ENCODE measurements at regions of chr19 and their contacts with region 1.

Region 1: DNA sequence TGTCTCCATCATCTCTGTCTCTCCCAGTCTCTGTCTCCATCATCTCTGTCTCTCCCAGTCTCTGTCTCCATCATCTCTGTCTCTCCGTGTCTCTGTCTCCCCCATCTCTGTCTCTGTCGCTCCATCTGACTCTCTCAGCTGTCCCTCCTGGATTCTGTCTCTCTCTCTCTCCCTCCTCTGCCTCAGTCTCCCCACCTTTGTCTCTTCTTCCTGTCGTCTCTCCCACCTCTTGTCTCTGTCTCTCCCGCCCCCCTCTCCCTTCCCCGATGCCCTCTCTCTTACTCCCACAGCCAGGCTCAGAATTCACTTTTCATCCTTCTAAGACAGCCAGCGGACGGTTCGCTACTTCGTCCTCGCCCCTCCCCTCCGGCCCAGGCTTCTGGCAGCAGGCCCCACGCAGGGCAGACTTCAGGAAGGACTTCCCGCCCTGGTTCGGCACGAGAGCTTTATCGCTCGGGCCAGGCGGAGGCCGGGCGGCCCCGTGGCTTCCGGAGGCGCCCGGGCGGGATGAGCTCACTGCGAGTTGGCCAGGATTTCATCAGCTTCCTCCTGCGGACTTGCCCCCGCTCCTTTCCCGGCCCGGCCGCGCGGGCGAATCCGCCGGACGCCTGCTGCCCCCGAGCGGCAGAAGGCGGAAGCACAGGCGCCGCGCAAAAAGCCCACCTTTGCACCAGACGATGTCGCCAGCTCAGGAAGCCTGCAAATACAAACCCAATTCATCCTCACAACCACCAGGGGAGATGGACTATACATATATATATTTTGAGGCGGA is 12.4 kb upstream of the CCDC9 start:
- DNase-seq: peak; percentile 90
- H3K4me3 Mint-ChIP-seq: peak overlapping the region; percentile 80
- H3K27ac Mint-ChIP-seq: peak overlapping the region; percentile 93
- H3K4me1 Mint-ChIP-seq: peaks cover 14% of the 10 kb centered on the region
- H3K27me3 Mint-ChIP-seq: peaks cover 7% of the 10 kb centered on the region

Region 2: GRCh38 chr19:47013041-47013517 is 230.9 kb before region 1 on chr19:
- intact Hi-C with region 1: loop called (anchors 1 kb)
- DNase-seq: peak; percentile 54
- H3K4me3 Mint-ChIP-seq: no peak overlapping the region
- H3K27ac Mint-ChIP-seq: no peak overlapping the region
- H3K4me1 Mint-ChIP-seq: peaks cover 11% of the 10 kb centered on the region
- H3K27me3 Mint-ChIP-seq: peaks cover 23% of the 10 kb centered on the region

Region 3: DNA sequence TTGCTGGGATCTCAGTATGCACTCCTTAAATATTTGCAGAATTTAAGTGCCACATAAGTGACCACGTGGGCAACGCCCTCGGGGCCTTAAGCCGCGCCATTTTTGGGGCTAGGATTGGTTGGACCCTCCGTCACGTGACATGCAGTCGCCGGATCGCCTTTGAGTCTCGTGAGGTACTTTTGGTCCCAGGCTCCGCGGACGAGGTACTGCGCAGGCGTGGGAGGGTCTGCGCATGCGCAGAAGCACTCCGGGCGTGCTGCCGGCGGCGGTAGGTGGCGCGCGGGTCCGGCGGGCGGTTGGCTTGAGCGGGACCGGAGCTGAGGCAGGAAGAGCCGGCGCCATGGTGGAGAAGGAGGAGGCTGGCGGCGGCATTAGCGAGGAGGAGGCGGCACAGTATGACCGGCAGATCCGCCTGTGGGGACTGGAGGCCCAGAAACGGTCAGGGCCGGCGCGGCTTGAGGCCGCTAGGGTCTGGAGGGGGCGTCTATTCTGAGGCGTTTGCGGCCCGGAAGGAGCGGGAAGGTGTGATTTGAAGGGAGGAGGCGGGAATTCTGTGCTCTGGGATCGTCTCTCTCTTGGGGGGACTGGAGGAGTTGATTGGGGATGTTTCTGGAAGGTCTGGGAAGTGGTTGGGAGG is 113.3 kb before region 1 on chr19 and contains the start of gene SAE1:
- intact Hi-C with region 1: loop called (anchors 1 kb)
- DNase-seq: peak; percentile 93
- H3K4me3 Mint-ChIP-seq: peak within 1 kb of the TSS; percentile 100
- H3K27ac Mint-ChIP-seq: peak within 1 kb of the TSS; percentile 97
- H3K4me1 Mint-ChIP-seq: peaks cover 56% of the 10 kb centered on the region
- H3K27me3 Mint-ChIP-seq: peaks cover 4% of the 10 kb centered on the region
- total RNA-seq, gene SAE1: 141 and 142 TPM in 2 replicates

Region 4: GRCh38 chr19:47190167-47190727 is 53.7 kb before region 1 on chr19:
- intact Hi-C with region 1: loop called (anchors 1 kb)
- DNase-seq: peak; percentile 27
- H3K4me3 Mint-ChIP-seq: peak overlapping the region; percentile 52
- H3K27ac Mint-ChIP-seq: peak overlapping the region; percentile 93
- H3K4me1 Mint-ChIP-seq: peaks cover 56% of the 10 kb centered on the region
- H3K27me3 Mint-ChIP-seq: no peaks in the 10 kb centered on the region

Region 5: DNA sequence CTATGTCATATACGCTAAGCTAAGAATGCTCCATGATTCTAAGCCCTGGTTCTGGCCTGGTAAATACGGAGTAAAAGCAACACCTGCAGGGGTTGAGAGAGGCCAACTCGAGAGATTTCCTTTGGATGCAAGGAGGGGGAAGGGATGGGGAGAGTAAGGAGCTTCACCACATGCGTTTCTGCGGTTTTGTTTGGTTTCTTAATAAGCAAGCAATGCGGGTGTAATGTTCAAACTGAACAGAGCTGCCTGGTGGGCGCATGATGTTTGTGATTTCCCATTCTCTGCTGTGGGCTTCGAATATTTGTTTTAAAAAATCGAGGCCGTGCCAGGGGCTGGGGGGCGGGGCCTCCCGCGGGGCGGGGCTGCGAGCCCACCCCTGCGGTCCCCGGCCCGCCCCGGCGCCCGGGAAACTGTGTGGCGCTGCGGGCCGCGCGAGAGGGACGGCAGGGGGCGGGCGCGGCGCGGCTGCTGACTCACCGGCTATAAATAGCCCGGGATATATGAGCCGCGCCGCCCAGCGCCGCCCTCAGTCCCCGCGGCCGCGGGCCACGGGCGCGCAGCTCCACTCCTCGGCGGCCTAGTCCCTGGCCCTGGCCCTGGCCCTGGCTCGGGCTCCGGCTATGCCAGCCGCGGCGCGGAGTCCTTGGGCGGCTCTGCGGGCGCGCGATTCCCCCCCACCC is 18.1 kb before region 1 on chr19:
- intact Hi-C with region 1: loop called (anchors 1 kb)
- DNase-seq: peak; percentile 87
- H3K4me3 Mint-ChIP-seq: peak overlapping the region; percentile 38
- H3K27ac Mint-ChIP-seq: peak overlapping the region; percentile 82
- H3K4me1 Mint-ChIP-seq: peaks cover 6% of the 10 kb centered on the region
- H3K27me3 Mint-ChIP-seq: no peaks in the 10 kb centered on the region

Region 6: DNA sequence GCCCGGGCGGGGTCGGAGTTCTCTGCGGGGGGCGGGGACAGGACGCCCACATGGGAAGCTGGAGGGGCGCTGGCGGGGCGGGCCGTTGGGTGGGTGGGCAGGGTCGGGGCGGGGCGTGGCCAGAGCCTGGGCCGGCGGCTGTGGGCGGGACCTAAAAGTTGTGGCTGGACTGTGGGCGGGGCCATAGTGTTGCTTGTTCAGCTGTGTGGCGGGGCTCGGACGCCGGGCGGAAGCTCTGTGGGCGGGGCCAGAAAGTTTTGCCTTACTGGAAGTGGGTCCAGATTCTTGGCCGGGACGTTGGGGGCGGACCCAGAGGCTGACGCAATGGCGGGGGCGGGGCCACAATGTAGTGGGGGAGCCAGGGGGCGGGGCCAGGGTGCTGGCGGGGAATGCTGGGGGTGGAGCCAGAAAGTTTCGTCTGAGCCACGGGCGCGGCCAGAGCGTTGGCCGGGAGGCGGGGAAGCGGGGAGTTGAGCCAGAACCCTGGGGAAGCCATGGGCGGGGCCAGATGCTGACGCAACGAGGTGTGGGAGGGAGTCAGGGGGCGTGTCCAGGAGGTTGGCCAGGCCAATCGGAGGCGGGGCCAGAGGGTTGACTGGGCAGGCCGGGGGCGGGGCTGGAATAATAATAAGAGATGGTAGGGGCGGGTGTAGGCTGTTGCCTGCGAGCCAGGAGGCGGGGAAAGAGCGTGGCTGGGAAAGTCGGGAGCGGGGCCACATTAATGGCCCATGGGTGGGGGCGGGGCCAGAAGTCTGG is 12.9 kb after region 1 on chr19:
- intact Hi-C with region 1: loop called (anchors 1 kb)
- DNase-seq: peak; percentile 99
- H3K4me3 Mint-ChIP-seq: peak overlapping the region; percentile 86
- H3K27ac Mint-ChIP-seq: peak overlapping the region; percentile 95
- H3K4me1 Mint-ChIP-seq: peaks cover 31% of the 10 kb centered on the region
- H3K27me3 Mint-ChIP-seq: peaks cover 2% of the 10 kb centered on the region

Region 7: GRCh38 chr19:47284324-47284899 is 40.5 kb after region 1 on chr19:
- intact Hi-C with region 1: no loop called
- DNase-seq: peak; percentile 30
- H3K4me3 Mint-ChIP-seq: no peak overlapping the region
- H3K27ac Mint-ChIP-seq: no peak overlapping the region
- H3K4me1 Mint-ChIP-seq: peaks cover 13% of the 10 kb centered on the region
- H3K27me3 Mint-ChIP-seq: no peaks in the 10 kb centered on the region

Measured in activated T-helper 1 cell treated with anti-CD3 and anti-CD28 coated beads, Interleukin-12 subunit alpha, Interleukin-12 subunit beta, Interleukin-2, Interleukin-4 antibody, amounts not matched to agents 30 ng/mL and 10 ng/mL and 1 ng/mL, durations not matched to agents 14 hours and 24 hours and 36 hours (primary cell).